Psoas muscle (tissue), 8 donors: ENCODE measurements at regions of chr12 and their contacts with region 1.

Region 1: DNA sequence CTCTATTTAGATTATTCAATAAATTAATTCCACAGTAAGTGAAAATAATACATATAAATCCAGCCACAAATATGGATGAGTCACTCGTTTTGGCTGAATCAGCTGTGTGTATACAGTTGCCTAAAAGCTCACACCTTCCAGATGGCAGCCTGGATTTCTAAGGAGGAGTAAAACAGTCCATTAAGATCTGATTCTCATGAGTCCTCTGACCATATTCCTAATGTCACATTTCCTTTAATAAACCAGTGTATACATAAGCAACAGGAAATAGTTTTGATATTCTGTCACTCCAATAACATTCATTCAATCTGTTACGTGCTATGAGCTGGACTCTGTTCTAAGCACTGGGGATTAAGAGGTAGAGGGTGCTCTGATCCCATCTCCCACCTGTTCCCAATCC is 21.8 kb downstream of the MDM1 start:
- DNase-seq: no peak
- ATAC-seq: no peak
- H3K4me3 ChIP-seq: no peak overlapping the region
- H3K27ac ChIP-seq: no peak overlapping the region
- H3K4me1 ChIP-seq: no peaks in the 10 kb centered on the region
- H3K27me3 ChIP-seq: no peaks in the 10 kb centered on the region
- CTCF ChIP-seq: no peak

Region 2: DNA sequence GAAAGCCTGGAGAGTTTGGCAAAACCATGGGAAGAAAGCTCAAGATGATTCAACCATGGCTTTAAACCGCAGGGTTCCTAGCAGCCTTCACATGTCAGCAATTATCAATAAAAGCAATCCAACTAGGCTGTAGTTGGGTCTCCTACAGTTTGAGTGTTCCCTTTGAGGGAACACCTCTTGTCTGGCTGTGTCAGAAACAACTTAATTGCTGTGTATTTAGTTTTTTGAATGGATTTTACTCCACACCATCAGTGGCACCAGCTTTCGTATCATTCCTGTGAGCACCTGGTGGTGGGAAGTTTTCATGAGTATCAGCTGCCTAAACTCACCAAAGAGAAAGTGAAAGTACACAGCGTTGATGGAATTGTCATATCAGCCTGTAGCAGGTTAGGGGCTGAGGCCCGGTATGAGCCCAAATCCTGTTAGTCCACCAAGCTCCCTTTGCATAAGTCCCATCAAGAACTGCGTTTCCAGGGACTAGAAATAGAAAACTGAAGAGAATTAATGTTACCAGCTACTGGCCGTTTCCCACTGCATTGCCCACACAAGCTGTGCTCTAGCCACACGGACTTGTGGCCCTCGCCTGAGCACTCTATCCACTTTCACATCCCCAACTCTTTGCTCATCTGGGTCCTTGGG is 73.8 kb before region 1 on chr12:
- intact Hi-C with region 1: loop called in 1 of 2 experiments (anchors 5 kb)
- DNase-seq: no peak
- ATAC-seq: peak in 1 of 4 donors; percentile 65
- H3K4me3 ChIP-seq: peak overlapping the region; percentile 54
- H3K27ac ChIP-seq: no peak overlapping the region
- H3K4me1 ChIP-seq: peaks cover 3% of the 10 kb centered on the region
- H3K27me3 ChIP-seq: no peaks in the 10 kb centered on the region
- CTCF ChIP-seq: peak; percentile 4

Region 3: GRCh38 chr12:68623984-68624383 is 313.6 kb after region 1 on chr12:
- intact Hi-C with region 1: no loop called
- DNase-seq: no peak
- ATAC-seq: no peak
- H3K4me3 ChIP-seq: no peak overlapping the region
- H3K27ac ChIP-seq: no peak overlapping the region
- H3K4me1 ChIP-seq: peaks cover 59% of the 10 kb centered on the region
- H3K27me3 ChIP-seq: no peaks in the 10 kb centered on the region
- CTCF ChIP-seq: no peak